ENCODE measurements at regions of chr13 and their contacts with region 1.

Region 1: GRCh38 chr13:21420706-21421105 is 38.4 kb downstream of the ZDHHC20 start:
- DNase-seq: no peak
- ATAC-seq: no peak
- H3K4me3 ChIP-seq: no peak overlapping the region
- H3K4me3 Mint-ChIP-seq: no peak overlapping the region
- H3K27ac ChIP-seq: no peak overlapping the region
- H3K27ac Mint-ChIP-seq: peak overlapping the region in 1 of 9 donors; percentile 41
- H3K4me1 ChIP-seq: no peaks in the 10 kb centered on the region
- H3K4me1 Mint-ChIP-seq: peaks cover 2 to 25% (median 19%) of the 10 kb centered on the region in 7 donors
- H3K27me3 ChIP-seq: no peaks in the 10 kb centered on the region
- H3K27me3 Mint-ChIP-seq: no peaks in the 10 kb centered on the region

Region 2: DNA sequence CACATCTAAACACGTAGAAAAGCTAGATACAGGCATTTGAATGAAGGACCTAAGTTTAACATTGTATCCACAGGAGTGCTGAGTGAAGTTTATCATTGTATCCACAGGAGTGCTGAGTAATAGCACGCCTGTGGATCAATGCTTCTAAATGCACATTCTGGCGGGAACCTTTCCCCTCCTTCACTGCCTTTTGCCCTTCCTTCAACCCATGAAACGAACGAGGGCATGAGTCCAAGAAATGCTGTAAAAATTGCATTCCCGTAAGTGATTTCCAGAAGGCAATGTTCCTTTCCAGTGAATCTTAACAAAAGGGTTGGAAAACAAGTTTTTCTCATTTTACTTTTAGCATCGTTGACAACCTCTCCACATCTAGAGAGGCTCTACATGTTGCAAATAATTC is 49.7 kb before region 1 on chr13:
- CTCF ChIA-PET with region 1: no interaction called
- POLR2A ChIA-PET with region 1: no interaction called
- intact Hi-C with region 1: no loop called
- DNase-seq: no peak
- ATAC-seq: no peak
- H3K4me3 ChIP-seq: no peak overlapping the region
- H3K4me3 Mint-ChIP-seq: no peak overlapping the region
- H3K27ac ChIP-seq: no peak overlapping the region
- H3K27ac Mint-ChIP-seq: peak overlapping the region in 1 of 9 donors; percentile 4
- H3K4me1 ChIP-seq: no peaks in the 10 kb centered on the region
- H3K4me1 Mint-ChIP-seq: peaks cover 0 to 6% (median 3%) of the 10 kb centered on the region in 7 donors
- H3K27me3 ChIP-seq: no peaks in the 10 kb centered on the region
- H3K27me3 Mint-ChIP-seq: no peaks in the 10 kb centered on the region

Region 3: DNA sequence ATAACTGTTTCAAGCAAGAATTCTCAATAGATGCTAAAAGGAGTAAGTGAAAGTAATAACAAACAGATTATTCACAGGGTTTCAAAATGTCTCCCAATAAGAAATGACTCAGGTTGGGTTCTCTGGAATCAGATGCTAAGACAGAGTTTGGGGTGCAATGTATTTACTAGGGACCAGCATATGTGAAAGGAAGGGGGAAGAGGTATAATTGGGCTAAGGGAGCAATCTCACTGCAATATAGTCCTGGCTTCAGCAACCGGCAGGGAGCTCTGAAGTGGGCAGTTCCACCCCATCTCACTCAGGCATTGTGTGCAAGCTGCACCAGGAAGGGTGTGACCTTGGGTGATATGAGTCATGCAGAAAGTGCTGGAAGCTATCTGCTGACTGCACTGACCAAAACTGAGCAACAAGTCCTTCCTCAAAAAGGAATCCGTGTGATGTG is 15.0 kb after region 1 on chr13:
- CTCF ChIA-PET with region 1: no interaction called
- POLR2A ChIA-PET with region 1: no interaction called
- intact Hi-C with region 1: loop called in 1 of 2 experiments (anchors 2 kb)
- DNase-seq: peak in 1 of 9 donors; percentile 38
- ATAC-seq: peak; percentile 95
- H3K4me3 ChIP-seq: peak overlapping the region; percentile 11
- H3K4me3 Mint-ChIP-seq: peak overlapping the region in 5 of 10 donors; percentile 3 to 68 (median 18)
- H3K27ac ChIP-seq: no peak overlapping the region
- H3K27ac Mint-ChIP-seq: peak overlapping the region in 3 of 9 donors; percentile 25 to 86 (median 33)
- H3K4me1 ChIP-seq: peaks cover 9 to 21% of the 10 kb centered on the region in 2 donors
- H3K4me1 Mint-ChIP-seq: peaks cover 30 to 61% (median 54%) of the 10 kb centered on the region in 7 donors
- H3K27me3 ChIP-seq: no peaks in the 10 kb centered on the region
- H3K27me3 Mint-ChIP-seq: no peaks in the 10 kb centered on the region

Region 4: GRCh38 chr13:21670883-21671619 is 250.3 kb after region 1 on chr13 and contains the start of gene FGF9:
- CTCF ChIA-PET with region 1: no interaction called
- POLR2A ChIA-PET with region 1: no interaction called
- intact Hi-C with region 1: no loop called
- DNase-seq: peak; percentile 76 to 88 (median 86)
- ATAC-seq: peak; percentile 89
- H3K4me3 ChIP-seq: peak within 1 kb of the TSS; percentile 92
- H3K4me3 Mint-ChIP-seq: peak within 1 kb of the TSS; percentile 88 to 98 (median 93)
- H3K27ac ChIP-seq: peak within 1 kb of the TSS; percentile 48
- H3K27ac Mint-ChIP-seq: peak within 1 kb of the TSS; percentile 61 to 94 (median 78)
- H3K4me1 ChIP-seq: peaks cover 19 to 32% of the 10 kb centered on the region in 2 donors
- H3K4me1 Mint-ChIP-seq: peaks cover 27 to 45% (median 44%) of the 10 kb centered on the region in 7 donors
- H3K27me3 ChIP-seq: peaks cover 0 to 4% of the 10 kb centered on the region in 2 donors
- H3K27me3 Mint-ChIP-seq: peaks cover 5 to 77% (median 20%) of the 10 kb centered on the region in 5 donors
- total RNA-seq, gene FGF9: 0.19 to 5.6 (median 2.0) TPM

Measured in naive thymus-derived CD4-positive, alpha-beta T cell (primary cell).